Dendritic cell treated with granulocyte-macrophage colony-stimulating factor and Interleukin-4, amounts not matched to agents 40 ng/mL and 50 ng/mL, for 4 days (primary cell): ENCODE measurements at regions of chr5 and their contacts with region 1.

Region 1: GRCh38 chr5:76682387-76682786 is 33.5 kb upstream of the F2R start:
- H3K4me3 Mint-ChIP-seq: no peak overlapping the region
- H3K27ac Mint-ChIP-seq: no peak overlapping the region
- H3K4me1 Mint-ChIP-seq: no peaks in the 10 kb centered on the region
- H3K27me3 Mint-ChIP-seq: no peaks in the 10 kb centered on the region

Region 2: DNA sequence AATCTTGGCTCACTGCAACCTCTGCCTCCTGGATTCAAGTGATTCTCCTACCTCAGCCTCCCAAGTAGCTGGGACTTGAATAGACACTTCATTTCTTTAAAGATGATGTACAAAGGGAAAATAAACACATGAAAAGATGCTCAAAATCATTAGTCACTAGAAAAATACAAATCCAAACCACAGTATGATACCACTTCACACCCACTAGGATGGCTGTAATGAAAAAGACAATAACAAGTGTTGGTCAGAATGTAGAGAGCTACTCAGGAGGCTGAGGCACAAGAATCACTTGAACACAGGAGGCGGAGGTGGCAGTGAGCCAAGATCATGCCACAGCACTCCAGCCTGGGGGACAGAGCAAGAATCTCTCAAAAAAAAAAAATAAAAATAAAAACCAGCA is 72.2 kb before region 1 on chr5:
- intact Hi-C with region 1: loop called (anchors 2 kb)
- H3K4me3 Mint-ChIP-seq: no peak overlapping the region
- H3K27ac Mint-ChIP-seq: no peak overlapping the region
- H3K4me1 Mint-ChIP-seq: peaks cover 18% of the 10 kb centered on the region
- H3K27me3 Mint-ChIP-seq: no peaks in the 10 kb centered on the region

Region 3: DNA sequence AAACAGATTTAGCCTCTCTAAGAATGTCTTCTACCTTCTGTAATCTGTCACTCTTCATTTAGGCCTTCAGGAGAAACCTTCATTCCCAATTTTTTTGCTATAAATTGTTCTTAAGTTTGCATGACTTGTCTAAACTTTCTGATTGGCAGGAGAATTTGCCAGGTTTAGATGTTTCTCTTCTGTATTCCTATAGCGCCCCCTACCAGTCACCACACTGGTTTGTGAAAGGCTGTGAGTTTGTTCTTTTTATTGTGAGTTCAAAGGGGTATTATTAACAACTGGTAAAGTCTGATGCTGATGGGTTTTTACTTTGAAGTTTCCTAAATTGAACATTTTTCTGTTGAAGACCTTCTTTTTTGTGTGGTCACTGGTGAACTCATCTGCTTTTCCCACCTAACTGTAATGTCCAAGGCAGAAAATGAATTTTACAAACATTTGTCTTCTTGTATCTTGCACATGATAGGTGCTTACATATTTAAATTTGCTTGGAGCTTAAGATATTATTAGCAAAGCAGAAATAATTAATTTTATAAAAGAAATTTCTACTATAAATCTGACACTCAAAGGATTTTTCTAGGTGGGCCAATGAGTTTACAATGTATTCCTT is 40.8 kb before region 1 on chr5:
- intact Hi-C with region 1: no loop called
- H3K4me3 Mint-ChIP-seq: no peak overlapping the region
- H3K27ac Mint-ChIP-seq: no peak overlapping the region
- H3K4me1 Mint-ChIP-seq: peaks cover 21% of the 10 kb centered on the region
- H3K27me3 Mint-ChIP-seq: no peaks in the 10 kb centered on the region

Region 4: DNA sequence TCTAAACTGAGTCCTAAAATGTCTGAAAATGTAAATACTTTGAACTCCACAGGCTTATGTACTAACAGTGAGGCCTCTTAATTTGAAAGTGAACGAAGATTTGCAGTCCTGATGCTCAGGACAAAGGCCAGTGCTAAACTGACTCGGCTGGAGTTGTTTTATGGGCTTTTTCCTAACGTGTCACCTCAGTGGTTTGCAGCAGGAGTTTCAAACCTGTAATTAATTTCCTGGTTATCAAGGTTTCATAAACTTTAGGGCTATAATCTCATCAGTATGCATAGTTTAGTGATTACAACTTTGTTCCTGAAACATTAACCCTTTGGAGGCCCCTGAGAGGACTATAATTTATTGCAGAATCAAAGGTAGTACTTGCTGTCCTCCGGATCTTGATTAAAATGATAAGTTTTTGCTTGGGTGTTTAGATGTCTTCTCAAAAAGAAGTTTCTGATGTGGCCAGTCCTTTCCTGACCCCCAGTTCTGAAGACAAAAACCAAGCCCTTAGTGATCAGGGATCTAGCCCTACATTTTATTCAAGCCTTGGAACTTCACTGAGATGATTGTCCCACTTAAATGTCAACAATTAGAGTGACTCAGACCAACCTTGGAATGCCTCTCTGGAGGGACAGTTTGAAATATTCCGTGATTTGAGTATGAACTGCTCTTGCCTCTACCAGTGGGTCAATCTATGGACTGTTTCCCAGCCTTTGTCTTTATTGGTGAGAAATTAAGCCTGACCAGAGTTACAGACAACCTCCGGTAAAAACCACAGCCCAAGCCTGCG is 156.3 kb after region 1 on chr5:
- intact Hi-C with region 1: no loop called
- H3K4me3 Mint-ChIP-seq: no peak overlapping the region
- H3K27ac Mint-ChIP-seq: no peak overlapping the region
- H3K4me1 Mint-ChIP-seq: peaks cover 14% of the 10 kb centered on the region
- H3K27me3 Mint-ChIP-seq: no peaks in the 10 kb centered on the region